Heart left ventricle (tissue), 16 donors: ENCODE measurements at regions of chr7 and their contacts with region 1.

Region 1: DNA sequence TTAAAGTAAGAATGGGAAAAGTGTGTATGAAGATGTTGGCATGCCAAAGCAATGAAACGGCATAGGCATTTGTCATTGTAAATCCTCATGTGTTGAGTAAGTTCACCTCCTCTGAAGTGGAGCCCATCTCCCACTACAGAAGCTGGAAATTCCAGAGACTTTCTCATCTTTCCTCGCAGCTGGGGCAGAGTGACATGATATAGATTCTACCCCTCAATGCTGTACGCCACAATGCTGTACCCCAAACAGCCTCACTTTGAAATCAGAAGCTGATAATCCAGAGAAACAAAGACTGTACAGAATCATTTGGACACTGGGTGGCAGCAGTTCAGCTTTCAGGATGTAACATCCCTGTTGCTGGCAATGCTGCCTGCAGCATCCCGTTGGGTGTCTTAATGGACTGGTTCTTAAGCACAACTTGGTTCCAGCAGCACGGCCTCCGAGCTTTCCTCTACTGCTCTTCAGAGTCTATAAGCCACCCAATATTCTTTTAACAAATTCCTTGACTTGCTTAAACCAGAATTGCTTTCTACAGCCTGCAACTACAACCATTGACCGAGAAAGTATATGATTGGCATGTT is 18.8 kb downstream of the ZC3HAV1L start:
- DNase-seq: peak in 4 of 5 donors; percentile 58 to 76 (median 62)
- ATAC-seq: peak; percentile 26 to 87 (median 74)
- H3K4me3 ChIP-seq: no peak overlapping the region
- H3K27ac ChIP-seq: no peak overlapping the region
- H3K4me1 ChIP-seq: peaks cover 0 to 7% (median 0%) of the 10 kb centered on the region in 12 donors
- H3K27me3 ChIP-seq: no peaks in the 10 kb centered on the region
- CTCF ChIP-seq: peak; percentile 48 to 79 (median 65)
- POLR2A ChIP-seq: no peak

Region 2: GRCh38 chr7:138204285-138204981 is 812.6 kb before region 1 on chr7:
- intact Hi-C with region 1: no loop called
- DNase-seq: no peak
- ATAC-seq: no peak
- H3K4me3 ChIP-seq: no peak overlapping the region
- H3K27ac ChIP-seq: no peak overlapping the region
- H3K4me1 ChIP-seq: peaks cover 0 to 6% (median 0%) of the 10 kb centered on the region in 12 donors
- H3K27me3 ChIP-seq: no peaks in the 10 kb centered on the region
- CTCF ChIP-seq: no peak
- POLR2A ChIP-seq: no peak

Region 3: GRCh38 chr7:138776166-138776894 is 240.7 kb before region 1 on chr7:
- intact Hi-C with region 1: no loop called
- DNase-seq: no peak
- ATAC-seq: no peak
- H3K4me3 ChIP-seq: no peak overlapping the region
- H3K27ac ChIP-seq: no peak overlapping the region
- H3K4me1 ChIP-seq: no peaks in the 10 kb centered on the region
- H3K27me3 ChIP-seq: peaks cover 0 to 7% (median 0%) of the 10 kb centered on the region in 9 donors
- CTCF ChIP-seq: no peak
- POLR2A ChIP-seq: no peak

Region 4: DNA sequence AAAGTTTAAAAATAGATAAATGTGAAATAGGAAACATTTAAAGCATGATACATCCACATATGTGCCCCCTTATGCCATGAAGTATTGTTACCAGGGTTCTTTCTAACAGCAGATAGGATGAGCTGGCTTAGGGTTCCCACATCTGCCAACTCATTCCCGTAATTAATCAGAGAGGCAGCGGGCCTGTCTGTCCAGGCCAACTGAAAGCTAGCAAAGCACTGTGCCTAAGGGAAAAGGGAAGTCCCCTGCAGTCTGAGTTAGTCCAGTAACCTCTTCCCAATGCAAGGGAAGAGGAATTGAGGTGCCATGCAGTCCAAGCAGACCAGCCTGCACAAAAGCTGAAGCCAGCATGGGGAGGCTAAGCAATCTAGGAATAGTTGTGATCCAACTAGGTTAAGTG is 37.1 kb after region 1 on chr7:
- intact Hi-C with region 1: no loop called
- DNase-seq: no peak
- ATAC-seq: no peak
- H3K4me3 ChIP-seq: no peak overlapping the region
- H3K27ac ChIP-seq: no peak overlapping the region
- H3K4me1 ChIP-seq: peaks cover 0 to 8% (median 2%) of the 10 kb centered on the region in 12 donors
- H3K27me3 ChIP-seq: no peaks in the 10 kb centered on the region
- CTCF ChIP-seq: no peak
- POLR2A ChIP-seq: no peak

Region 5: GRCh38 chr7:139124084-139124914 is 107.3 kb after region 1 on chr7:
- intact Hi-C with region 1: loop called in 2 of 10 experiments (anchors 5 to 10 kb)
- DNase-seq: no peak
- ATAC-seq: no peak
- H3K4me3 ChIP-seq: no peak overlapping the region
- H3K27ac ChIP-seq: no peak overlapping the region
- H3K4me1 ChIP-seq: peaks cover 0 to 4% (median 0%) of the 10 kb centered on the region in 12 donors
- H3K27me3 ChIP-seq: peaks cover 0 to 11% (median 0%) of the 10 kb centered on the region in 9 donors
- CTCF ChIP-seq: no peak
- POLR2A ChIP-seq: no peak